ENCODE measurements at regions of chr2 and their contacts with region 1.

Region 1: DNA sequence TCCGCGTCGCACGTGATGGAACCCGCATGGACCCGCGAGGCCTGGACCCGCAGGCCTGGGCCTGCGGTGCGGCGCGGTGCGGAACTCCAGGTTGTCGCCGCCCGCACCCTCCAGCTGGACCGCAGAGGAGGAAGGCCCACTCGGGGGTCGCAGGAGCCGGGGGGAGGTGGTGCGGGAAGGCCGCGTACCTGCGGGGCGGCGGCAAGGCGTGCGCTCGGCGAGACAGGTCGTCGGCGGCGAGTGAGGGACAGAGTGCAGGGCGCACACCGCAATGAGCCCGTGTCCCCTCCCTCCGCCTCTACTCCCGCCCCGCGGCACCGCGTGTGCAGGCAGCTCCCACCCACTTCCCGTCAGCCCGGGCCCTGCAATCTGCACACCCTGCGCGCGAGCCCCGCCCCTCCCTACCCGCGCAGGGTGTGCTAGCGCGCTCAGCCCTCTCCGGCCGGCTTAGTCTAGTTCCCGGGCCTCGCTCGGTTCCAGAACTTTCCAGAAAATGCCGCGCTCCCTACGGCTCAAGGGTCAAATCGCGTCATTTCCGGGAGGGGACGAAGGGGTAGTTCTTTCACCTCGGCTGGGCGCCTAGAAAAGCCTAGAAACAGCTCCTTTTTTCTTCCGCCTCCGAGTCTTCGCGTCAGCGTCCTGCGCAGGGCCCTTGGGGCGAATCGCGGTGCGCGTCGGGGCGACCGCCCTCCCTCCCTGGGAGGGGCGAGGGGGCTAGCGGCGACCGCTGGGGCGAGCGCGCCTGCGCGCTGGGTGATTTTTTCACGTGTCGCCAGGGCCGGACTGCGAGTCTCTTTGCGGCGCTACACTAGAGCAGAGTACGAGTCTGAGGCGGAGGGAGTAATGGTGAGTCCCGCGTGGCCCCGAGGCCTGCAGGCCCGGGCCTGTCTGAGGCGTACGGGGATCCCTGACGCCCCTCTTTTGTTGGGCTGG is at the starts of genes HSPD1 and HSPE1:
- DNase-seq: peak; percentile 89 to 98 (median 97)
- ATAC-seq: peak; percentile 93
- H3K4me3 ChIP-seq: peak within 1 kb of the TSS; percentile 94
- H3K4me3 Mint-ChIP-seq: peak within 1 kb of the TSS; percentile 84 to 100 (median 94)
- H3K27ac ChIP-seq: peak within 1 kb of the TSS; percentile 90
- H3K27ac Mint-ChIP-seq: peak within 1 kb of the TSS; percentile 83 to 98 (median 95)
- H3K4me1 ChIP-seq: peaks cover 17 to 41% of the 10 kb centered on the region in 2 donors
- H3K4me1 Mint-ChIP-seq: peaks cover 31 to 69% (median 57%) of the 10 kb centered on the region in 7 donors
- H3K27me3 ChIP-seq: no peaks in the 10 kb centered on the region
- H3K27me3 Mint-ChIP-seq: no peaks in the 10 kb centered on the region
- total RNA-seq, gene HSPD1: 127 to 276 (median 137) TPM
- total RNA-seq, gene HSPE1: 46.3 to 127 (median 52.2) TPM

Region 2: GRCh38 chr2:196639180-196640030 is 860.5 kb before region 1 on chr2 and contains the start of gene CCDC150:
- CTCF ChIA-PET with region 1: no interaction called
- POLR2A ChIA-PET with region 1: no interaction called
- intact Hi-C with region 1: loop called in 1 of 2 experiments (anchors 1 kb)
- DNase-seq: peak; percentile 88 to 95 (median 94)
- ATAC-seq: peak; percentile 100
- H3K4me3 ChIP-seq: peak within 1 kb of the TSS; percentile 86
- H3K4me3 Mint-ChIP-seq: peak within 1 kb of the TSS; percentile 82 to 92 (median 88)
- H3K27ac ChIP-seq: peak within 1 kb of the TSS; percentile 48
- H3K27ac Mint-ChIP-seq: peak within 1 kb of the TSS in 8 of 9 donors; percentile 30 to 78 (median 43)
- H3K4me1 ChIP-seq: peaks cover 7 to 8% of the 10 kb centered on the region in 2 donors
- H3K4me1 Mint-ChIP-seq: peaks cover 4 to 26% (median 19%) of the 10 kb centered on the region in 7 donors
- H3K27me3 ChIP-seq: no peaks in the 10 kb centered on the region
- H3K27me3 Mint-ChIP-seq: peaks cover 0 to 15% (median 0%) of the 10 kb centered on the region in 5 donors
- total RNA-seq, gene CCDC150: 0.13 to 11.2 (median 1.2) TPM

Region 3: DNA sequence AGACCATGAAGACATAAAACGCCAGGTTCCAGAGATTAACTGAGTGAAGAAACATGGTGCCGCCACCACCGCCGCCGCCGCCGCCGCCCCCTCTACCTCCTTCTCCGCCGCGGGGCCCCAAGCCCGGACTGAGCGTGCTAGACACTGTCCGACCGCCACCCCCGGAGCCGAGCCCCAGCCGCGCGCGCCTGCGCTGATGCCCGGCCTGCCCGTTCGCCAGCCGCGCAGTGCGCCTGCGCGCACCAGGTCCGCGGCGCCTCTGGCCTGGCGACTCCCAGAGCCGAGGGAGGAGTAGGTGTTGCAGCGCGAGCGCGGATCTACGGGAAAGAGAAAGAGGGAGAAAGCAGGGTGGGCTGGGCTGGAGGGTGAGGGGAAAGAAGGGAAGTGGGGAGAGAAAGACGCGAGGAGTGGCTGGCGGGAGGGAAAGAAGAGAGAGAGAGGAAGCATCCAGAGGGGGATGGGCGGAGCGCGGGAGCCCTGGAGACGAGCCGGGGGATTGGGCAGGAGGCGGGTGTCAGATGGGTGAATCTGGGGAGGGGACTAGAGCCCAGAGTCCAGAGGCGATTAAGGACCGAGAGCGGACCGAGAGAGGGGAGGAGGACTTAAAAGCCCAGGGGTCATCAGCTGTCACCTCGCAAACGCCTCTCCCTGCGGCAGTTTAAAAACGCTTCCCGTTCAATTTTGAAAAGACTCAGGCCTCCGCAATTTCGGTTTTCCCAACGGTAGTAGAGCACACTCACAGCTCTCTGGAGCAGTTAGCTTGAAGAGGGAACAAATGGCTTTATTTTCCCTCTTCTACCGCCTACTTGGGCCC is 573.1 kb before region 1 on chr2 and contains the start of gene PGAP1:
- CTCF ChIA-PET with region 1: no interaction called
- POLR2A ChIA-PET with region 1: no interaction called
- intact Hi-C with region 1: loop called in 1 of 2 experiments (anchors 5 kb)
- DNase-seq: peak; percentile 66 to 95 (median 72)
- ATAC-seq: peak; percentile 89
- H3K4me3 ChIP-seq: peak within 1 kb of the TSS; percentile 91
- H3K4me3 Mint-ChIP-seq: peak within 1 kb of the TSS; percentile 85 to 100 (median 96)
- H3K27ac ChIP-seq: peak within 1 kb of the TSS; percentile 79
- H3K27ac Mint-ChIP-seq: peak within 1 kb of the TSS; percentile 90 to 97 (median 94)
- H3K4me1 ChIP-seq: peaks cover 4 to 6% of the 10 kb centered on the region in 2 donors
- H3K4me1 Mint-ChIP-seq: peaks cover 22 to 43% (median 39%) of the 10 kb centered on the region in 7 donors
- H3K27me3 ChIP-seq: no peaks in the 10 kb centered on the region
- H3K27me3 Mint-ChIP-seq: peaks cover 0 to 2% (median 0%) of the 10 kb centered on the region in 5 donors
- total RNA-seq, gene PGAP1: 6.0 to 48.4 (median 6.9) TPM

Region 4: DNA sequence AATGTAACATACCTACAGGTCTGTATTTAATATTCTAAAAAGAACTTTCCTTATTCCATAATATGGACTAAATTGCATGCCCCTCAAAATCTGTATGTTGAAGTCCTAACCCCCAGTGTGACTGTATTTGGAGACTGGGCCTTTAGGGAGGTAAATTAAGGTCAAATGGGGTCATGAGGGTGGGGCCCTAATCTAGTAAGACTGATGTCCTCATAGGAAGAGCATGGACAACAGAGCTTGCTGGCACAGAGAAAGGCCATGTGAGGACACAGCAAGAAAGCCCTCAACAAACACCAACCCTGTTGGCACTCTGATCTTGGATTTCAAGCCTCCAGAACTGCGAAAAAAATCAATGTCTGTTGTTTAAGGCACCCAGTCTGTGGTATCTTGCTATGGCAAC is 83.6 kb before region 1 on chr2:
- CTCF ChIA-PET with region 1: interaction called, 4 read pairs
- POLR2A ChIA-PET with region 1: no interaction called
- intact Hi-C with region 1: loop called in 1 of 2 experiments (anchors 5 kb)
- DNase-seq: no peak
- ATAC-seq: no peak
- H3K4me3 ChIP-seq: no peak overlapping the region
- H3K4me3 Mint-ChIP-seq: no peak overlapping the region
- H3K27ac ChIP-seq: no peak overlapping the region
- H3K27ac Mint-ChIP-seq: peak overlapping the region in 2 of 9 donors; percentile 17 to 59
- H3K4me1 ChIP-seq: peaks cover 0 to 4% of the 10 kb centered on the region in 2 donors
- H3K4me1 Mint-ChIP-seq: peaks cover 9 to 26% (median 15%) of the 10 kb centered on the region in 7 donors
- H3K27me3 ChIP-seq: no peaks in the 10 kb centered on the region
- H3K27me3 Mint-ChIP-seq: no peaks in the 10 kb centered on the region

Region 5: GRCh38 chr2:197453161-197453914 is 46.5 kb before region 1 on chr2 and contains the start of gene COQ10B:
- CTCF ChIA-PET with region 1: interaction called, 5 read pairs
- POLR2A ChIA-PET with region 1: interaction called, 69 read pairs
- intact Hi-C with region 1: loop called (anchors 1 kb)
- DNase-seq: peak; percentile 87 to 99 (median 98)
- ATAC-seq: peak; percentile 92
- H3K4me3 ChIP-seq: peak within 1 kb of the TSS; percentile 92
- H3K4me3 Mint-ChIP-seq: peak within 1 kb of the TSS; percentile 92 to 100 (median 99)
- H3K27ac ChIP-seq: peak within 1 kb of the TSS; percentile 96
- H3K27ac Mint-ChIP-seq: peak within 1 kb of the TSS; percentile 97 to 100 (median 100)
- H3K4me1 ChIP-seq: peaks cover 16% of the 10 kb centered on the region in 2 donors
- H3K4me1 Mint-ChIP-seq: peaks cover 25 to 56% (median 47%) of the 10 kb centered on the region in 7 donors
- H3K27me3 ChIP-seq: no peaks in the 10 kb centered on the region
- H3K27me3 Mint-ChIP-seq: peaks cover 0 to 2% (median 0%) of the 10 kb centered on the region in 5 donors
- total RNA-seq, gene COQ10B: 22.9 to 57.2 (median 30.5) TPM

Region 6: DNA sequence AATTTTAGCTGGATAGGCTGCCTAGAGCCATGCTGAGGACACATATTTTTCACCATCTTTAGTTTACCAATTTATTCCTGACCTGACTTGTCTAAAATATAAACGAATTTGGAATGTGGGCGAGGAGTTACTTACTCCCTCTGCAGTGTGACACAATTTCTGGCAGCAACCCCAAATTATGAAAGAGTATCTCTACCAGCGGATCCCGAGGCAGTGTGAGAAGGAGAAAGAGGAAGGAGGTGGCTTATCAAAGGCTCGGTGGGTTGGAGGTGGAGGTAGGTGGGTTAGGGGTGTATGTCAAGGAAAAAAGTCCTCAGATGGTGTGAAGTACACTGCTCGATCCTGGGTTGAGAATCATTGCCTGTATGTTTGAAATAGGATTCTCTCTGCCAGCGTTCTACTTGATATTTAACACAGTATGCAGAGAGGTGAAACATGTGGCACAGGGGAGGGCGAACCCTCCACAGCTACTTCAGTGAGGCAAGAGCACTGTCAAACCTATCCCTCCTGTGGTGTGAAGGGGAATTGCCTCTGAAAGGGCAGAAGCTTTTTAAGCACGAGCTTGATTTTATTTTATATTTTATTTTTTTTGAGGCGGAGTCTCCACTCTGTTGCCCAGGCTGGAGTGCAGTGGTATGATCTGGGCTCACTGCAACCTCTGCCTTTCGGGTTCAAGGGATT is 99.6 kb after region 1 on chr2:
- CTCF ChIA-PET with region 1: no interaction called
- POLR2A ChIA-PET with region 1: interaction called, 5 read pairs
- intact Hi-C with region 1: loop called in 1 of 2 experiments (anchors 1 kb)
- DNase-seq: peak in 7 of 9 donors; percentile 28 to 67 (median 55)
- ATAC-seq: peak; percentile 92
- H3K4me3 ChIP-seq: no peak overlapping the region
- H3K4me3 Mint-ChIP-seq: peak overlapping the region in 8 of 10 donors; percentile 23 to 74 (median 66)
- H3K27ac ChIP-seq: no peak overlapping the region
- H3K27ac Mint-ChIP-seq: peak overlapping the region in 1 of 9 donors; percentile 56
- H3K4me1 ChIP-seq: no peaks in the 10 kb centered on the region
- H3K4me1 Mint-ChIP-seq: peaks cover 4 to 6% (median 6%) of the 10 kb centered on the region in 7 donors
- H3K27me3 ChIP-seq: no peaks in the 10 kb centered on the region
- H3K27me3 Mint-ChIP-seq: peaks cover 6 to 30% (median 19%) of the 10 kb centered on the region in 5 donors

Region 7: DNA sequence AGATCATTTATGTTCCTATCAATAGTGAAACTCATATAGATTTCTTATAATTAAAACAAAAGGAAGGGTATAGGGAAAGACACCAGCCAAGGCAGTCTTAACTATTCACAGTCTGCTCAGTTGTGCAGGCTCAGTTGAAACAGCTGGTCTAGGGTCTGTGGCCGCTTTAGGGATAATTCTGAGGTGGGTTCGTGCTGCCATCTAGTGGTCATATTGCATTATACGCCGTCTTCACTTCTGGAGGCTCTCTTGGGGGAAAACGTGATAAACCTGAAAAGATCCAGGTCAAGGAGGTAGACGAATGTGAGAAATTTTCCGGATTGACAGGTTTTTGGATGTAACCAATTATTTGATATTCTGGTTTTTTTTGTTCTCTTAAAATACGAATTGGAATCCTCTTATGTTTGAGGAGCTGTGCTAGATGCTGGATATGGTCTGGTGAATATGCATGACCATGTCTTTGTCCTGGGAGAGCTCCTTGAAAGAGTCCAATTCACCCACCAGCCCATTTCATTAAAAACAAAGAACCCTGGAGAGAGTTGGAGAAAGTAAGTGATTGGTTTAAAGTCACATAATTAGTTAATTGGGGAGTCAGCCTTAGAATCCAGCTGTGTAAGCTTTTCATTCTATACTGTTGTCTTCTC is 796.9 kb after region 1 on chr2:
- CTCF ChIA-PET with region 1: no interaction called
- POLR2A ChIA-PET with region 1: no interaction called
- intact Hi-C with region 1: loop called in 1 of 2 experiments (anchors 1 kb)
- DNase-seq: peak; percentile 11 to 67 (median 54)
- ATAC-seq: peak; percentile 84
- H3K4me3 ChIP-seq: no peak overlapping the region
- H3K4me3 Mint-ChIP-seq: peak overlapping the region in 1 of 10 donors; percentile 8
- H3K27ac ChIP-seq: no peak overlapping the region
- H3K27ac Mint-ChIP-seq: peak overlapping the region in 1 of 9 donors; percentile 41
- H3K4me1 ChIP-seq: no peaks in the 10 kb centered on the region
- H3K4me1 Mint-ChIP-seq: peaks cover 0 to 5% (median 0%) of the 10 kb centered on the region in 7 donors
- H3K27me3 ChIP-seq: no peaks in the 10 kb centered on the region
- H3K27me3 Mint-ChIP-seq: peaks cover 7 to 19% (median 8%) of the 10 kb centered on the region in 5 donors

Measured in naive thymus-derived CD4-positive, alpha-beta T cell (primary cell).